Head of caudate nucleus (tissue), 42 donors: ENCODE measurements at regions of chr12 and their contacts with region 1.

Region 1: GRCh38 chr12:3275171-3276041 is 198.2 kb downstream of the TSPAN9 start:
- DNase-seq: peak; percentile 40 to 92 (median 81)

Region 2: GRCh38 chr12:3073438-3074250 is 201.8 kb before region 1 on chr12:
- intact Hi-C with region 1: loop called (anchors 5 kb)
- DNase-seq: peak; percentile 59 to 94 (median 88)

Region 3: GRCh38 chr12:3135522-3136461 is 139.6 kb before region 1 on chr12:
- intact Hi-C with region 1: loop called (anchors 5 kb)
- DNase-seq: peak in 34 of 42 donors; percentile 15 to 80 (median 48)

Region 4: GRCh38 chr12:3177778-3178425 is 97.5 kb before region 1 on chr12:
- intact Hi-C with region 1: no loop called
- DNase-seq: no peak